Prostate gland (tissue), 2 donors: ENCODE measurements at regions of chr12 and their contacts with region 1.

Region 1: GRCh38 chr12:77685112-77685511 is 145.6 kb upstream of the NAV3 start:
- DNase-seq: peak; percentile 47
- H3K4me3 ChIP-seq: no peak overlapping the region
- H3K27ac ChIP-seq: no peak overlapping the region
- H3K4me1 ChIP-seq: no peaks in the 10 kb centered on the region
- H3K27me3 ChIP-seq: no peaks in the 10 kb centered on the region
- CTCF ChIP-seq: peak in 3 of 4 experiments; percentile 21 to 63 (median 45)
- POLR2A ChIP-seq: no peak

Region 2: DNA sequence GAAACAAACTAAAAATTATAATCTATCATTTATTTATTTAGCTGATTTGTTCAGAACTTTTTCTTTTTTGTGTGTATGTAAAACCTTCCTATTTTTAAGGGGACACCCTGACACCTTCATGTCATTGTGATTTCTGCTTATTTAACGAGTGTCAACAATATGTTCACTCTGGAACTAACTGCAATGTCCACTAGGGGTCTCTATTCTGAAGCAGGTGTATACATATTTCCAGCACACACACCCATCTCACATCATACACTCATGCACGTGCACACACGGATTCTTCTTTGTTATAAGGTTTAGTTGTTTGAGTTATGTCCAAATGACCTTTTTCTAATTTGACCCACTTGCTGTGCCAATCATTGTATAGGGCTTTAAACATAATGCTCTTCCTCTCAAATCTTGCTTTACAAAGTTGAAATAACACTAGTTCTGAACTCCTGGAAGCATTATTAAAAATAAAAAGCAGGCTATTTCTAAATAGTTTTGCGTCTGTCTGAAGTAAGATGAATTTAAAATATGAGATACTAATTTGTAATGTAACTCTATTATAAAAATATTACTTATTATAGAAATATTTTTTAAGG is 635.3 kb before region 1 on chr12:
- intact Hi-C with region 1: loop called (anchors 5 kb)
- DNase-seq: peak; percentile 39
- H3K4me3 ChIP-seq: no peak overlapping the region
- H3K27ac ChIP-seq: no peak overlapping the region
- H3K4me1 ChIP-seq: no peaks in the 10 kb centered on the region
- H3K27me3 ChIP-seq: no peaks in the 10 kb centered on the region
- CTCF ChIP-seq: peak; percentile 32 to 78 (median 66)
- POLR2A ChIP-seq: no peak

Region 3: GRCh38 chr12:77152623-77153193 is 532.4 kb before region 1 on chr12:
- intact Hi-C with region 1: loop called (anchors 5 kb)
- DNase-seq: no peak
- H3K4me3 ChIP-seq: no peak overlapping the region
- H3K27ac ChIP-seq: no peak overlapping the region
- H3K4me1 ChIP-seq: no peaks in the 10 kb centered on the region
- H3K27me3 ChIP-seq: no peaks in the 10 kb centered on the region
- CTCF ChIP-seq: peak in 3 of 4 experiments; percentile 22 to 53 (median 45)
- POLR2A ChIP-seq: no peak

Region 4: DNA sequence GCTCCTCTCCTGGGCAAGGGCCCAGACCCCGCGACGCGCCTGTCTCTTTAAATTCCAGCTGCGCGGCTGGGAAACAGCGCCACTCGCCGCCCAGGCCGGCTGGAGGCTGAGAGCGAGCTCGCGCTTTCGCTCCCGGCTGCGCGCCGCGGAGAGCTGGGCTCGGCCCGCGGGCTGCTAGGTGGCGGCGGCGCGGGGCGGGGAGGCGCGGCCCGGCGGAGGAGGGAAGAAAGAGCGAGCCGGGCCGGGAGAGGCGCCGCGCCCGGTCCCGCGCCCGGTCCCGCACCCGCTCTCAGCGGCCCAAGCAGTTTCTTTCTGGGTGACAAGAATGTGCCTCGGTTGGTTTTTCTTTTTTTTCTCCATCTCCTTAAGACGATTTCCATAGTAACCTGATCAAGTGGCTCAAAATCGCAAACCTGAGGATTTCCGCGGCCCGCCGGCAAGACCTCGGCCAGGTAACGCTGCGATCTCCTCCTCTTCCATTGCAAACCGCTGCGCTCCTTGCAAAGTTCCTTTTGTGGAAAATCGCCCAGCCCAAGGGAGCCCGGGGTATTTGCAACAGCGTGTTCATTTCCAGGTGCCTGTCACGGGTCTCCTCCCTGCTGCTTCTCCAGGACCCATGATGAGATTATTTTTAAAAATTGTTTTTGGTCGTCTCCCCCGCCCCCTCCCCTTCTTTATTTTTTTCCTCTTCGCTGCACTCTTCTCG is 360.2 kb before region 1 on chr12:
- intact Hi-C with region 1: loop called (anchors 10 kb)
- DNase-seq: peak; percentile 44
- H3K4me3 ChIP-seq: peak overlapping the region; percentile 40 to 42
- H3K27ac ChIP-seq: no peak overlapping the region
- H3K4me1 ChIP-seq: no peaks in the 10 kb centered on the region
- H3K27me3 ChIP-seq: no peaks in the 10 kb centered on the region
- CTCF ChIP-seq: peak in 3 of 4 experiments; percentile 19 to 42 (median 41)
- POLR2A ChIP-seq: no peak

Region 5: DNA sequence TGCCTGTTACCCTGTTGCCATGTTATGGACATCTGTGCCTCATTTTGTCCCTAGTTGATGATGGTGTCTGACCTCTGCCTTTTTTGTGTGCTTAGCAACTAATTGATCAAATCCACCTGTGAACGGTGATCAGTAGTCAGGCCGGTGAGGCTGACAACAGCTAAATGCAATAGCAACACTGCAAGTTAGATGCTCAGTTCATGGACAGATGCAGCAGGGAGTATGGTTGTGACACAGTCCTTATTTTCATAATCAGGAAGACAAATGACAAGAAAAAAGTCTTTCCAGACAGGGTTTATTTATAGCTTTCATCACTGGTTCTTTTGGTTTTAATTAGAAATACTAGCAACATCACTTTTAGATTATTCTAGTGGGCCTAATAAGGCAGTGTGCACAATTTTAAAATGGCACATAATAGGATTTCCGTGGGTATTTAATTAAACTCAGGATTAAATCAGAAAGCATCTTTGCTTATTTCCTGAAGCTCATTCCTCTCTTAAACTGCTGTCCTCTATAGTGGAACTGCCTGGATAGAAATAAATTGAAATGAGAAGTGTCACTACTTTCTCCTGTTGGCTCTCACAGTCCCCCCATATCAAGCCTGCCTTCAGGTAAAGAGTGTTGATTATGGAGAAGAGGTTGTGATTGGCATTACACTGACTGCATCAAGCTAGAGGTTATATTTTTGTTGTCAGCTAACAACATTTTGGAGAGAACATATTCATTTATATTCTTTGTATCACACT is 135.6 kb before region 1 on chr12:
- intact Hi-C with region 1: no loop called
- DNase-seq: no peak
- H3K4me3 ChIP-seq: no peak overlapping the region
- H3K27ac ChIP-seq: no peak overlapping the region
- H3K4me1 ChIP-seq: no peaks in the 10 kb centered on the region
- H3K27me3 ChIP-seq: no peaks in the 10 kb centered on the region
- CTCF ChIP-seq: no peak
- POLR2A ChIP-seq: no peak